Activated CD8-positive, alpha-beta T cell treated with anti-CD3 and anti-CD28 coated beads for 36 hours (primary cell): ENCODE measurements at regions of chr7 and their contacts with region 1.

Region 1: DNA sequence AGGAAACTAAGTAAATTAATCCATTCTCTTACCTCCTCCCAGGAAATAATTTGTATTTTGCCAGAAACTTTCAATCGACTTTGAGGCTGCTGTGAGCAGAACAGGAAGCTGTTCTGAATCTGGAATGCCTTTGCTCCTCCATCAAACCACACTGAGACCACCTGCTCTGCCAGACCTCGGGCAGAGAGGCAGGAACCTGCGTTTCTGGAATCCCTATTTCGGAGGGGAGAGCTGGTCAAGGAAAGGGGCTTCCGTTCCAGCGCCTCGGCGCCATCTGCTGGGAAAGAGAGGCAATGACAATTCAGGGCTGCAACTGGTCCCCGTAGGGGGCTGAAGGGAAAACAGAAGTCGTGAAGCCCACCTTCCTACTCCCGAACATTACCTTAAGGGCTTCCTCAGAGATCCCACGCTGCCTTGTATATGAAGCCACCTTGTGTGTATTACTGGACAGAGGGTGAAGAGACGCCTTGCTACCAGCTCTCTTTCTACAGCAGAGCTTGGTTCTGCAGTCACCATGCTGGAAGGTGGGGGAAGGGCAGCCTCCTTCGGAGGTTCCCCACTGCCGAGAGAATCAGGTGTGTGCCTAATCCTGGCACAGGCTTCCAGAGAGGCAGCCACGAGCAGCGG is 31.2 kb downstream of the ZNF467 start:
- DNase-seq: peak; percentile 73
- ATAC-seq: peak; percentile 91
- H3K4me3 Mint-ChIP-seq: peak overlapping the region; percentile 58
- H3K27ac Mint-ChIP-seq: no peak overlapping the region
- H3K4me1 Mint-ChIP-seq: peaks cover 11% of the 10 kb centered on the region
- H3K27me3 Mint-ChIP-seq: peaks cover 35% of the 10 kb centered on the region
- CTCF ChIP-seq: peak; percentile 95

Region 2: GRCh38 chr7:149662591-149663095 is 79.5 kb before region 1 on chr7:
- CTCF ChIA-PET with region 1: interaction called, 74 read pairs
- POLR2A ChIA-PET with region 1: no interaction called
- intact Hi-C with region 1: loop called (anchors 2 kb)
- DNase-seq: peak; percentile 86
- ATAC-seq: peak; percentile 96
- H3K4me3 Mint-ChIP-seq: no peak overlapping the region
- H3K27ac Mint-ChIP-seq: no peak overlapping the region
- H3K4me1 Mint-ChIP-seq: no peaks in the 10 kb centered on the region
- H3K27me3 Mint-ChIP-seq: peaks cover 34% of the 10 kb centered on the region
- CTCF ChIP-seq: peak; percentile 37

Region 3: DNA sequence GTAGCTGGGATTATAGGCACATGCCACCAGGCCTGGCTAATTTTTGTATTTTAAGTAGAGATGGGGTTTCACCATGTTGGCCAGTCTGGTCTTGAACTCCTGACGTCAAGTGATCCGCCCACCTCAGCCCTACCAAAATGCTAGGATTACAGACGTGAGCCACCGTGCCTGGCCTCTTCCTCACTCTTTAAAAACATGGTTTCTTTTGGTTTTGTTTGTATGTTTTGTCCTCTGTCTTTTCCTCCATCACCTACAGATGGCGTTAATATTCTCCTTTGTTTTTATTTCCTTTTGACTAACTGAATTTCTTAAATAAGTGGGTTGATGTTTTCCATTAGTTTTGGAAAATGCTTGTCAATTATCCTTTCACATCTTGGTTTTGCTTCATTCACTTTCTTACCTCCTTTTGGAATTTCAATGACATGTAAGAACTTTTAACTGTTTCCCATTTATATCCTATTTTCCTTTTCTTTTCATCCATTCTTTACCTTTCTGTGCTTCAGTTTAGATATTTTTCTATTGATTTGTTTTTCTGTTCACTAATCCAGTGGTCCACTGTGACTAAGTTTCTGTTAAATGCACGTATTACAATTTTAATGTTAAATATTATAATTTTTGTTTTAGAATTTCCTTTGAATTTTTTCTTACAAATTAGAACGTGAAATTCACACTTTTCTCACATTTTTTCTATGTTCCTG is 72.9 kb before region 1 on chr7:
- CTCF ChIA-PET with region 1: interaction called, 74 read pairs
- POLR2A ChIA-PET with region 1: no interaction called
- intact Hi-C with region 1: no loop called
- DNase-seq: peak; percentile 58
- ATAC-seq: peak; percentile 74
- H3K4me3 Mint-ChIP-seq: no peak overlapping the region
- H3K27ac Mint-ChIP-seq: no peak overlapping the region
- H3K4me1 Mint-ChIP-seq: no peaks in the 10 kb centered on the region
- H3K27me3 Mint-ChIP-seq: peaks cover 37% of the 10 kb centered on the region
- CTCF ChIP-seq: peak; percentile 37

Region 4: GRCh38 chr7:149724661-149725425 is 17.3 kb before region 1 on chr7:
- CTCF ChIA-PET with region 1: interaction called, 11 read pairs
- POLR2A ChIA-PET with region 1: no interaction called
- intact Hi-C with region 1: no loop called
- DNase-seq: no peak
- ATAC-seq: no peak
- H3K4me3 Mint-ChIP-seq: no peak overlapping the region
- H3K27ac Mint-ChIP-seq: no peak overlapping the region
- H3K4me1 Mint-ChIP-seq: peaks cover 5% of the 10 kb centered on the region
- H3K27me3 Mint-ChIP-seq: no peaks in the 10 kb centered on the region
- CTCF ChIP-seq: no peak

Region 5: GRCh38 chr7:149729983-149730801 is 12.0 kb before region 1 on chr7:
- CTCF ChIA-PET with region 1: interaction called, 22 read pairs
- POLR2A ChIA-PET with region 1: no interaction called
- intact Hi-C with region 1: no loop called
- DNase-seq: no peak
- ATAC-seq: no peak
- H3K4me3 Mint-ChIP-seq: no peak overlapping the region
- H3K27ac Mint-ChIP-seq: no peak overlapping the region
- H3K4me1 Mint-ChIP-seq: no peaks in the 10 kb centered on the region
- H3K27me3 Mint-ChIP-seq: no peaks in the 10 kb centered on the region
- CTCF ChIP-seq: no peak